K562 (cell line): ENCODE measurements at regions of chrX and their contacts with region 1.

Region 1: GRCh38 chrX:3638280-3638873 is 75.1 kb downstream of the PRKX start:
- DNase-seq: peak; percentile 52 to 62 (median 54)
- ATAC-seq: peak; percentile 83
- H3K4me3 ChIP-seq: no peak overlapping the region
- H3K27ac ChIP-seq: no peak overlapping the region
- H3K4me1 ChIP-seq: no peaks in the 10 kb centered on the region
- H3K27me3 ChIP-seq: no peaks in the 10 kb centered on the region
- CTCF ChIP-seq: peak; percentile 43 to 64 (median 62); a peak in 5 of 6 replicates
- EP300 ChIP-seq: no peak
- POLR2A ChIP-seq: no peak
- RAD21 ChIP-seq: peak; percentile 59 to 67

Region 2: GRCh38 chrX:2875798-2876399 is 762.5 kb before region 1 on chrX:
- CTCF ChIA-PET with region 1: no interaction called
- POLR2A ChIA-PET with region 1: no interaction called
- in situ Hi-C with region 1: loop called (anchors 25 kb)
- intact Hi-C with region 1: no loop called
- DNase-seq: no peak
- ATAC-seq: peak; percentile 33; the same call in 1 of the 3 replicates
- H3K4me3 ChIP-seq: no peak overlapping the region
- H3K27ac ChIP-seq: peak overlapping the region; percentile 59; the same call in 2 of the 3 replicates
- H3K4me1 ChIP-seq: peaks cover 12 to 34% of the 10 kb centered on the region in 2 experiments; a peak in 4 of 5 replicates
- H3K27me3 ChIP-seq: no peaks in the 10 kb centered on the region
- CTCF ChIP-seq: peak in 2 of 3 experiments; percentile 27 to 38; a peak in 2 of 6 replicates
- EP300 ChIP-seq: no peak
- POLR2A ChIP-seq: no peak
- RAD21 ChIP-seq: 0 out of 4 replicates have a peak, but pooled peaks of 1 of the 2 experiments have one; percentile 12

Region 3: GRCh38 chrX:2894885-2895292 is 743.5 kb before region 1 on chrX:
- CTCF ChIA-PET with region 1: no interaction called
- POLR2A ChIA-PET with region 1: no interaction called
- in situ Hi-C with region 1: loop called (anchors 25 kb)
- intact Hi-C with region 1: loop called (anchors 2 kb)
- DNase-seq: peak in 1 of 4 experiments; percentile 29
- ATAC-seq: no peak
- H3K4me3 ChIP-seq: no peak overlapping the region
- H3K27ac ChIP-seq: no peak overlapping the region
- H3K4me1 ChIP-seq: peaks cover 14 to 31% of the 10 kb centered on the region in 2 experiments; a peak in 4 of 5 replicates
- H3K27me3 ChIP-seq: no peaks in the 10 kb centered on the region
- CTCF ChIP-seq: no peak
- EP300 ChIP-seq: no peak
- POLR2A ChIP-seq: no peak
- RAD21 ChIP-seq: no peak

Region 4: GRCh38 chrX:3037218-3037617 is 601.2 kb before region 1 on chrX:
- CTCF ChIA-PET with region 1: no interaction called
- POLR2A ChIA-PET with region 1: no interaction called
- in situ Hi-C with region 1: no loop called
- intact Hi-C with region 1: loop called (anchors 5 kb)
- DNase-seq: no peak
- ATAC-seq: no peak
- H3K4me3 ChIP-seq: no peak overlapping the region
- H3K27ac ChIP-seq: no peak overlapping the region
- H3K4me1 ChIP-seq: no peaks in the 10 kb centered on the region
- H3K27me3 ChIP-seq: no peaks in the 10 kb centered on the region; a peak in 1 of 5 replicates
- CTCF ChIP-seq: no peak
- EP300 ChIP-seq: no peak
- POLR2A ChIP-seq: no peak
- RAD21 ChIP-seq: no peak

Region 5: GRCh38 chrX:3119376-3119775 is 519.0 kb before region 1 on chrX:
- CTCF ChIA-PET with region 1: no interaction called
- POLR2A ChIA-PET with region 1: no interaction called
- in situ Hi-C with region 1: no loop called
- intact Hi-C with region 1: loop called (anchors 5 kb)
- DNase-seq: no peak
- ATAC-seq: no peak
- H3K4me3 ChIP-seq: no peak overlapping the region
- H3K27ac ChIP-seq: no peak overlapping the region
- H3K4me1 ChIP-seq: no peaks in the 10 kb centered on the region
- H3K27me3 ChIP-seq: no peaks in the 10 kb centered on the region
- CTCF ChIP-seq: no peak
- EP300 ChIP-seq: no peak
- POLR2A ChIP-seq: no peak
- RAD21 ChIP-seq: no peak

Region 6: GRCh38 chrX:3231766-3232165 is 406.6 kb before region 1 on chrX:
- CTCF ChIA-PET with region 1: no interaction called
- POLR2A ChIA-PET with region 1: no interaction called
- in situ Hi-C with region 1: loop called (anchors 10 kb)
- intact Hi-C with region 1: no loop called
- DNase-seq: no peak
- ATAC-seq: no peak
- H3K4me3 ChIP-seq: no peak overlapping the region
- H3K27ac ChIP-seq: no peak overlapping the region
- H3K4me1 ChIP-seq: no peaks in the 10 kb centered on the region
- H3K27me3 ChIP-seq: no peaks in the 10 kb centered on the region
- CTCF ChIP-seq: no peak
- EP300 ChIP-seq: no peak
- POLR2A ChIP-seq: no peak
- RAD21 ChIP-seq: no peak